ENCODE measurements at regions of chr2 and their contacts with region 1.

Region 1: GRCh38 chr2:127486247-127487058 is 39.8 kb downstream of the IWS1 start:
- DNase-seq: no peak
- ATAC-seq: peak; percentile 38

Region 2: DNA sequence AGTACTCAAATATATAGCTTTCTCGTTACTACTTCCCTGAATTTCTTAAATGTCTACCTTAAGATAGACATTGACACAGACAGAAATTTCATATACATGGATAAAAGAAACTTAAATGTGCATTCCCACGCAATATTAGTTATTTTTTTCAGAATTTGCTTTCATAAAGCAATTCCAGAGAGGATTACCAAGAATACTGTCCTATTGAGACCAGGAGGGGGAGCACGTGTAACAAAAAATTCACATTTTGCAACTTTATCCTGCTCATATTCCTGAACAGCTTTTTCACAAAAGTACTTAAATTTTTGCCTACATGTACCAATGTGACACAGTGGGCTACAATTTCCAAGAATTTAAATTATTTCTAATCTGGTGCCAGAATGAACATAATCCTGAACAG is 161.8 kb before region 1 on chr2:
- intact Hi-C with region 1: loop called (anchors 10 kb)
- DNase-seq: no peak
- ATAC-seq: no peak

Measured in sciatic nerve (tissue), 2 donors.